AG04450 (cell line): ENCODE measurements at regions of chr14 and their contacts with region 1.

Region 1: GRCh38 chr14:68824517-68825347 is 31.9 kb upstream of the ZFP36L1 start:
- DNase-seq: no peak
- H3K4me3 ChIP-seq: no peak overlapping the region
- H3K27ac ChIP-seq: no peak overlapping the region
- H3K27me3 ChIP-seq: no peaks in the 10 kb centered on the region
- CTCF ChIP-seq: peak; percentile 90

Region 2: GRCh38 chr14:67837011-67837624 is 987.6 kb before region 1 on chr14:
- CTCF ChIA-PET with region 1: interaction called, 10 read pairs
- POLR2A ChIA-PET with region 1: no interaction called
- DNase-seq: peak; percentile 61
- H3K4me3 ChIP-seq: no peak overlapping the region
- H3K27ac ChIP-seq: no peak overlapping the region
- H3K27me3 ChIP-seq: no peaks in the 10 kb centered on the region
- CTCF ChIP-seq: peak; percentile 76

Region 3: GRCh38 chr14:67883717-67884116 is 941.0 kb before region 1 on chr14:
- CTCF ChIA-PET with region 1: interaction called, 11 read pairs
- POLR2A ChIA-PET with region 1: no interaction called
- DNase-seq: no peak
- H3K4me3 ChIP-seq: no peak overlapping the region
- H3K27ac ChIP-seq: no peak overlapping the region
- H3K27me3 ChIP-seq: no peaks in the 10 kb centered on the region
- CTCF ChIP-seq: peak; percentile 28

Region 4: DNA sequence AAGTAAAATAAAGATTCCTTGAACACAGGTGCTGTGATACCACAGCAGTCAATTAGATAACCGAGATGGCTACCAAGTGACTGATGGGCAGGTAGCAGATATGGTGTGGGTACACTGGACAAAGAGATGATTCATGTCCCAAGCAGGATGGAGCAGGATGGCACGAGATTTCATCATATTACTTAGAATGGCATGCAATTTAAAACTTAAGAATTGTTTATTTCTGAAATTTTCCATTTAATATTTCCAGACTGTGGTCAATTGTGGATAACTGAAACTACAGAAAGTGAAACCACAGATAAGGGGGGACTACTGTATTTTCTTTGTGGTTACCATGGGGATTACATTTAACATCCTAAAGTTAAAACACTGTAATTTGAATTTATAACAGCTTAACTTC is 24.3 kb before region 1 on chr14:
- CTCF ChIA-PET with region 1: no interaction called
- POLR2A ChIA-PET with region 1: no interaction called
- DNase-seq: no peak
- H3K4me3 ChIP-seq: no peak overlapping the region
- H3K27ac ChIP-seq: no peak overlapping the region
- H3K27me3 ChIP-seq: no peaks in the 10 kb centered on the region
- CTCF ChIP-seq: no peak

Region 5: DNA sequence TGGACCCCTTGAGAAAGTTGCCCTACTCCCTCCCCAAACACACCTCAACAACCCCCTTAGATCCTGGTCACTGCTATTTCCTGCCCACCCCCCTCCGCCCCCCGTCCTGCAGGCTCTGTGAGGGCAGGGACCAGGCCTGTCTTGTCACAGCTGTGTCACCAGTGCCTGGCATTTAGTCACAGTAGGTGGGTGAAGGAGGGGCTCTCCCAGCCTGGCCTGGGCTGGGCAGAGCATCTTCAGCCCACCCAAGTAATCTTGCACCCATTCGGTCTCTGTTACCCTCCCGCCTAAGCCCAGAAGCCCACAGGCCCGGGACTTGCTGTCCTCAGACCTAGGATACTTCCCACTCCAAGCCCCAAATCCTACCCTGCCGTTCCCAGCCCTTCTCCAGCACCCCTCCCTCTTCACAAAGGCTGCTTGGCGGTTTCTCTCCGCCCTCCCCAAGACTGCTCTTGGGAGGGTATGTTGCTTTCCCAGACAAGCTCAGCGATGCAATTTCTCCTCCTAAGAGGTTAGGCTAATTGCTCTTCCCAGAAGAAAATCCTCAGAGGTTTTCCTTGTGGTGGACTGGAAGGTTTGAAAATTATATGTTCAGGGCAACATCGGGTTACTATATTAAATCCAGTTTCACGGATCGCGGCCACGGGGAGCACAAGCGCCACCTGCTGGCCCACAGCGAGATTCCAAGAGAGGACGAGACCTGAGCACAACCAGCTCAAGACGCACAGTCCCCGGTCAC is 18.9 kb after region 1 on chr14:
- CTCF ChIA-PET with region 1: interaction called, 34 read pairs
- POLR2A ChIA-PET with region 1: no interaction called
- DNase-seq: peak; percentile 34
- H3K4me3 ChIP-seq: no peak overlapping the region
- H3K27ac ChIP-seq: no peak overlapping the region
- H3K27me3 ChIP-seq: no peaks in the 10 kb centered on the region
- CTCF ChIP-seq: peak; percentile 93